Adrenal gland (tissue), 19 donors: ENCODE measurements at regions of chr18 and their contacts with region 1.

Region 1: DNA sequence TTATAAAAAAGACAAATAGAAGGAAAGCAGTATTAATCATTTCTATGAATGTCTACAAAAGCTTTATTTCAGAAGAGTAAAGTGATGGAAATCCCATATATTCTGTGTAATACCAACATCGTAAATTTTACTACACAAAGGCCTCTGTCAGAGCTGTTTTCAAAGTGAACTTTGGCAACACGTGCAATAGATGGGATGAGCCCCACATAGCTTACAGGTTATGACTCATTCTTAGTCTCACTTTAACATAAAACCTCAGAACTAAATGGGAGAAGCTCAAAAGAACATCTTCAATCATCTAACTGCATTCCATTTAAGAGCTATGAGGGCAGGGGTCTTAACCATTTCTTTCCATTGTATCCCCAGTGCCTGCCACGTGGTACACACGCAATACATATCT is 11.5 kb downstream of the VPS4B start:
- DNase-seq: no peak
- H3K4me3 ChIP-seq: no peak overlapping the region
- H3K27ac ChIP-seq: no peak overlapping the region
- H3K4me1 ChIP-seq: peaks cover 0 to 7% of the 10 kb centered on the region in 2 donors
- H3K27me3 ChIP-seq: no peaks in the 10 kb centered on the region
- CTCF ChIP-seq: no peak
- POLR2A ChIP-seq: no peak

Region 2: DNA sequence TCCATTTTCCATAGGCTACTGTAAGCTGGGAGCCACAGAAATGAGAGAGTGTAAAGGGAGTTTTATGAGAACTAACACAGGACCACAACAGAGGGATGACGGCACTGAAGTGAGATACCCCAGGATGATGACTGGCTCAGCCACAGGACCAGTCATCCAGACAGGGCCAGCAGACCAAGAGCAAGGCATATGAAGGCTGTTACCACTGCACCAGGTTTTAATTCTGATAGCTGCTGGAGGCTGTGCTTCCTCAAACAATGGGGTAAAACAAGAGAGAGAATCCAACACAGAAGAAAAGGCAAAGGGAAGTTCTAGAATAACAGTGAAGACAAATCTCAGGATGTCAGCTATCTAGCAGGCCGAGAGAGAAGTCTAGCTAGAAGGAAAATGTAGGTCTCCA is 186.2 kb before region 1 on chr18:
- intact Hi-C with region 1: no loop called
- DNase-seq: no peak
- H3K4me3 ChIP-seq: no peak overlapping the region
- H3K27ac ChIP-seq: no peak overlapping the region
- H3K4me1 ChIP-seq: peaks cover 0 to 4% of the 10 kb centered on the region in 2 donors
- H3K27me3 ChIP-seq: no peaks in the 10 kb centered on the region
- CTCF ChIP-seq: no peak
- POLR2A ChIP-seq: no peak

Region 3: DNA sequence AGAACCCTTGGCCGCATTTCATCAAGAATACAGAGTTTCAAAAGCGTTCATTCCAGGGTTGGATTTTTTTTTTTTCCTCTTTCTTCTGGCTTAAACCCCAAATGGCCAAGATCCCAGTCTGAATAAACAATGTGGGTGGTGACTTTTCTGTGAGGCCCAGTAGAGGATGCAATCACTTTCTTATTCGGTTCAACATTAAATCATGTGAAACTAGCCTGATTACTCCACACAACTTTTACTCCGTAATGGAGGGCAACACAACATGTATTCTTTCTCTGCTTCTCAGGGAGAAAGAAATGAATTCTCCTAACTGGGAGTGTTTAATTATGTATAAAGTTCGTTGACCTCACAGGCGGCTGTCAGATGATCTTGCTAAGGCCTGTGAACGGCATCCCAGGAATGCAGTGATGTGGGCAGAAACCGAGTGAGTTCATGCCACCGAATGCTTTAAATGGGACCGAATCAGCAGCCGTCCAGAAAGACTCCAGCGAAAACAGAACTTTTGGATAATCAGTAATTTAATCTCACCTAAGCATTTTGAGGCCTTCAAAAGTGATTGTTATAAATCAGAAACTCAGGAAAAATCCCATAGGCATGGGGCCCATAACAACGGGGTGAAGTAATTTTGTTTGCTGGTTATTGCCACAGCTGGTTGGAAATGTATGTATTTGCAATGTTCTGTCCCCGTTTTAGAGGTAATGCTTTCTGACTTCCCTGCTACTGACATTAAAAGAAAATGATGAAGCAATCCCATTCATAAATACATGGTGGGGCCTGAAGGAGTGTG is 172.7 kb before region 1 on chr18:
- intact Hi-C with region 1: no loop called
- DNase-seq: peak in 4 of 7 donors; percentile 24 to 39 (median 32)
- H3K4me3 ChIP-seq: no peak overlapping the region
- H3K27ac ChIP-seq: peak overlapping the region in 3 of 5 donors; percentile 65 to 84 (median 75)
- H3K4me1 ChIP-seq: peaks cover 0 to 16% of the 10 kb centered on the region in 2 donors
- H3K27me3 ChIP-seq: no peaks in the 10 kb centered on the region
- CTCF ChIP-seq: no peak
- POLR2A ChIP-seq: no peak

Region 4: DNA sequence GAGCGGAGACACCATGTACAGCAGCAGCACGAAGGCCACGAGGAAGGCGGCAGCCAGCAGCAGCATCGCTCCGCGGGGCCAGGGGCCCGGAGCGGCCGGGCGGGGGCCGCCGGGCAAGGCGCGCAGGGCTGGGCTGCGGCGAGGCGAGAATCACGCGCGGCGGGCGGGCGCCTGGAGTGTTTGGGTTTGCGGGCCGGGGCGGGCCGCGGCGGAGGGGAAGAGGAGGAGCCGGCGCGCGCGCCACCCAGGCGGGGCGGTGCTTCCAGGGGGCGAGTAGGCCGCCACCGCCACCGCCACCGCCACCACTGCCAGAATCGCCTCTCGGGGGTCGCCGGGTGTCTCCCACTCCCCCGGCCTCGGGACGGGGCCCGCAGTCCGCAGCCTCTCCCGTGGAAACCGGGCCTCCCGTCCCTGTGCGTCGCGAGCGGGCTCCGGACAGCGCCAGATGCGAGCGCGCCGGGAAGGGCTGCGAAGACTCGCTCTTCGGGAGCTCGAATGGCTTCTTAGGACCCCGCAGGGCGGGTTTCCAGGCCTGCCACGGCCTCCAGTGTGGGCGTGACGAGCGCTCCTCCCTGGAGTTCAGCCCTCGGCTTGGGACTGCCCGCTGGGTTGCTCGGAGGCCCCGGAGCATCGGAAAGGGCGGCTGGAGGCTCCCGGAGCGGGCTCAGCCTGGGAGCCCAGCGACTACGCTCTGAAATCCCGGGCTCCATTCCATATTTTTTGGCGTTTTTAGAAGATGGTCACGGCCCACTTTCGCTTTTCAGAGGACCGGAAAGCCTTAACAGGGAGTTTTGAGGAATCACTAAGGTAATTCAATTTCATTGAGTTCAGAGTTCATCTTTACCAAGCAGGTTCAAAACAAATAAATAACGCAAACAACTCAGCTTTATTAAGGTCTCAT is 43.5 kb before region 1 on chr18 and contains the start of gene KDSR:
- intact Hi-C with region 1: loop called in 1 of 2 experiments (anchors 10 kb)
- DNase-seq: peak; percentile 94 to 98 (median 97)
- H3K4me3 ChIP-seq: peak within 1 kb of the TSS; percentile 41 to 81 (median 68)
- H3K27ac ChIP-seq: peak within 1 kb of the TSS; percentile 83 to 100 (median 98)
- H3K4me1 ChIP-seq: peaks cover 0 to 28% of the 10 kb centered on the region in 2 donors
- H3K27me3 ChIP-seq: no peaks in the 10 kb centered on the region
- CTCF ChIP-seq: no peak
- POLR2A ChIP-seq: peak; percentile 91 to 92
- total RNA-seq, gene KDSR: 25.6 to 102 (median 51.6) TPM